CD14-positive monocyte (primary cell): ENCODE measurements at regions of chr9 and their contacts with region 1.

Region 1: DNA sequence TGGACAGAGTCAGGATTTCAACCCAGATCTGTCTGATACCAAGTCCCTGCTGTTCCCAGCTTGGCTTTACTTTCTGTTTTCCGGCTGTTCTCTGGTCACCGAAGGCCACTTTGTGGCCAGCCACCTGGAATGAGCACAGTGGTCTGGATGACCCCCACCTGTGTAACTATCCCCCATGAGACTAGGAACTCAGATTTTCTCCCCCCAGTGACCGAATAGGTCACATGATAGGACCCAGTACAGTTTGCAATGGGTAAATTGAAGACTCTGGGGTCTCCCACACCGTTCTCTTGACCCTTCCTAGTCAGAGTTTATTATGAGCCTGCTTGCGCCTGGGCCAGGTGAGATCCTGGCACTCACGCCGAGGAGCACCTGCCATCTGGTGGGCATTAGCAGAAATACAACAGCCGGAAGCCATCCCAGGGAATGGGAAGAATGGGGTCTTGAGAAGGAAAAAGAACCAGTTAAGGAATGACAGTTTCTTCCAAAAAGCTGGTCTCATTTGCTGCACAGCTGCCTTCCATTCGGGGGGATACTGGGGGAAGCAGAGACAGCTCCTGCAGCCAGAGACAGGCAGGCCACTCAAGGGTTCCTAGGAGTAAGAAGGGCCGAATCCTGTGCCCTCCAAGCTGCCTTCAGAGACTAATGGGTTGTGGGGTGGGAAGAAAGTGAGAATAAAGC is 7.1 kb downstream of the PHYHD1 start:
- DNase-seq: peak in 2 of 3 donors; percentile 27 to 35
- H3K4me3 ChIP-seq: no peak overlapping the region
- H3K4me3 Mint-ChIP-seq: no peak overlapping the region
- H3K27ac ChIP-seq: no peak overlapping the region
- H3K27ac Mint-ChIP-seq: no peak overlapping the region
- H3K4me1 ChIP-seq: no peaks in the 10 kb centered on the region
- H3K4me1 Mint-ChIP-seq: peaks cover 3% of the 10 kb centered on the region
- H3K27me3 ChIP-seq: no peaks in the 10 kb centered on the region
- H3K27me3 Mint-ChIP-seq: peaks cover 0 to 4% (median 2%) of the 10 kb centered on the region in 3 donors
- CTCF ChIP-seq: peak; percentile 88

Region 2: DNA sequence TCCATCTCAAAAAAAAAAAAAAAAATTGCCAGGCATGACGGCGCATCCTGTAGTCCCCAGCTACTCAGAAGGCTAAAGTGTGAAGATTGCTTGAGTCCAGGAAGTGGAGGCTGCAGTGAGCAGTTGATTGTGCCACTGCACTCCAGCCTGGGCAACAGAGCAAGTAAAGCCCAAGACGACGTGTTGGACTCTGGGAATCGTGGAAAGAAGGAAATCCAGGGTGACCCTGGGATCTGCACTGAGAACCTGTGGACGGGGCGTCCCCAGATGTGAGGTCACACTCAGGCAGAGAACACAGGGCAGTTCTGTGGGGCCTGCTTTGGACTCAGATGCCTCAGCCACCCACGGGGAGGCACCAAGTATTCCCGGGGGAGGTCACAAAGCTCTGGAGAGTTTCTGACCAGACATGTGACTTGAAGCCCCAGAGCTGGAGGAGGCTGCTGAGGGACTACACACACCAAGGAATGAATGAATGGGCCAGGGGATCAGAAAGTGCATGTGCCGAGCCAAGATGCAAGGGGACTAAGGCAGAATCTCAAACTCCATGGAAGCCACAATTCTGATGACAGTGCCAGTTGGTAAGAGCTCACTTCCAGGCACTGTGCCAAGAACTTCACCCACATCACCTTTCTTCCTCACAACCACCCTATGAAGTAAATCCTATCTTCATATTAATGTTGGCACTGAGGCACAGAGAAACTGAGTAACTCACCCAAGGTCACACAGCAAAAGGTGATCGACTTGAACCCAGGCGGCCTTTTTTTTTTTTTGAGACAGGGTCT is 284.2 kb before region 1 on chr9:
- intact Hi-C with region 1: loop called in 1 of 2 experiments (anchors 10 kb)
- DNase-seq: no peak
- H3K4me3 ChIP-seq: no peak overlapping the region
- H3K4me3 Mint-ChIP-seq: no peak overlapping the region
- H3K27ac ChIP-seq: no peak overlapping the region
- H3K27ac Mint-ChIP-seq: peak overlapping the region in 2 of 7 donors; percentile 2 to 82
- H3K4me1 ChIP-seq: no peaks in the 10 kb centered on the region
- H3K4me1 Mint-ChIP-seq: no peaks in the 10 kb centered on the region
- H3K27me3 ChIP-seq: no peaks in the 10 kb centered on the region
- H3K27me3 Mint-ChIP-seq: peaks cover 0 to 3% (median 3%) of the 10 kb centered on the region in 3 donors
- CTCF ChIP-seq: no peak

Region 3: DNA sequence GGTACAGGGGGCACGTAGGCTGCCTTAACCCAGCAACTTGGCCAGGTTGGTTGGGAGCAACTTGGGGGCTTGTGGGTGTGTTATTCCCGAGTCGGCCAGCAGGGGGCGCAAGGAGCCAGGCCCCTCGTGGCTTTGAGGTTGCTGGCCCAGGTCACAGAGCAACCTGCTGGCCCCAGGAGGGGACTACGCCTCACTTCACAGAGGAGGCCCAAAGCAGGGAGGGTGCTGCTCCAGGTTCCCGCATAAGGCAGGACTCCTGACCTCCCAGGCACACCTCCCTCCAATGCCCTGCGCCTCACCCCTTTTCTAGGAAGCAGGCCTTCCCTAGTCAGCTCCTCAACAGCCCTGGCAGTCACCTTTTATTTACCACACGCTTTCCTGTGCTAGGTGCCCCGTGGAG is 64.2 kb before region 1 on chr9:
- intact Hi-C with region 1: loop called (anchors 5 kb)
- DNase-seq: peak; percentile 63 to 73 (median 71)
- H3K4me3 ChIP-seq: no peak overlapping the region
- H3K4me3 Mint-ChIP-seq: no peak overlapping the region
- H3K27ac ChIP-seq: no peak overlapping the region
- H3K27ac Mint-ChIP-seq: peak overlapping the region in 1 of 7 donors; percentile 12
- H3K4me1 ChIP-seq: no peaks in the 10 kb centered on the region
- H3K4me1 Mint-ChIP-seq: peaks cover 13% of the 10 kb centered on the region
- H3K27me3 ChIP-seq: no peaks in the 10 kb centered on the region
- H3K27me3 Mint-ChIP-seq: no peaks in the 10 kb centered on the region
- CTCF ChIP-seq: peak; percentile 99

Region 4: DNA sequence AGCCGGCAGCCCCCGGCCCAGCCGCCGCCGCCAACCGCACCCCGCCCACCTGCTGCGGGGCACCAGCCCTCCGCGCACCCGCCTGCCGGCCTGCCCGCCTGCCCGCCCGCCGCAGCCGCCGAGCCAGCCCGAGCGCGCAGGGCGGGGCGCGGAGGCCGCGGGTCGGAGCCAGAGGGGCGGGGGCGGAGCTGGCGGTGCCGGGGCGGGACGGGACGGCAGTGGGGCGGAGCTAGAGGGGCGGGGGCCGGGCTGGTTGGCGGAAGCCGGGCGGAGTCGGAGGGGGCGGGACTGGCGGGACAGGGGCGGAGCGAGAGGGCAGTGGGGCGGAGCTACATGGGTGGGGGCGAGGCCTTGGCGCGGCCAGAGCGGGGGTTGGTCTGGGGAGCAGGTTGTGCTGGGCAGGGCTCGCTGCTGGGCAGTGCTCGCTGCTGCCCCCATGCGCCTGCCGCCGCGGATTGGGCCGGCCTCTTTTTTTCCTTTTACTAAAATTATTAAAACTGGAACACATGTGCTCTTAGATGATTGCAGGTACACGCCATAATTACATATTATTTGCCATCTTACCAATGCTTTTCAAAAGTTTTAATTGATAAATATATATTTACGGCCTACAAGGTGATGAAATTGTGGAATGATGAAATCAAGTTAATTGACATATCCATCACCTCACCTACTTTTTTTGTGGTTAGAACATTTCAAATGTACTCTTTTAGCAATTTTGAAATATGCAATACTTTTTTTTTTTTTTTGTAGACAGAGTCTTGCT is 100.5 kb after region 1 on chr9 and contains the start of gene SH3GLB2:
- intact Hi-C with region 1: no loop called
- DNase-seq: peak; percentile 92 to 97 (median 95)
- H3K4me3 ChIP-seq: peak within 1 kb of the TSS; percentile 47 to 78 (median 65)
- H3K4me3 Mint-ChIP-seq: peak within 1 kb of the TSS; percentile 71 to 85
- H3K27ac ChIP-seq: no peak within 1 kb of the TSS
- H3K27ac Mint-ChIP-seq: peak within 1 kb of the TSS in 1 of 7 donors; percentile 26
- H3K4me1 ChIP-seq: peaks cover 12 to 24% of the 10 kb centered on the region in 2 donors
- H3K4me1 Mint-ChIP-seq: peaks cover 20% of the 10 kb centered on the region
- H3K27me3 ChIP-seq: no peaks in the 10 kb centered on the region
- H3K27me3 Mint-ChIP-seq: no peaks in the 10 kb centered on the region
- CTCF ChIP-seq: peak; percentile 83
- polyA plus RNA-seq, gene SH3GLB2: 8.0 to 77.0 (median 25.9) TPM